ENCODE measurements at regions of chr14 and their contacts with region 1.

Region 1: GRCh38 chr14:97994020-97994531 is 1196.9 kb downstream of the VRK1 start:
- DNase-seq: peak in 9 of 14 experiments; percentile 14 to 87 (median 50)
- ATAC-seq: peak; percentile 81
- H3K4me3 ChIP-seq: no peak overlapping the region
- H3K4me3 Mint-ChIP-seq: peak overlapping the region; percentile 43
- H3K27ac ChIP-seq: peak overlapping the region; percentile 68 to 75
- H3K27ac Mint-ChIP-seq: peak overlapping the region; percentile 93
- H3K4me1 ChIP-seq: peaks cover 51% of the 10 kb centered on the region
- H3K4me1 Mint-ChIP-seq: peaks cover 88% of the 10 kb centered on the region
- H3K27me3 ChIP-seq: no peaks in the 10 kb centered on the region
- H3K27me3 Mint-ChIP-seq: no peaks in the 10 kb centered on the region
- CTCF ChIP-seq: no peak

Region 2: DNA sequence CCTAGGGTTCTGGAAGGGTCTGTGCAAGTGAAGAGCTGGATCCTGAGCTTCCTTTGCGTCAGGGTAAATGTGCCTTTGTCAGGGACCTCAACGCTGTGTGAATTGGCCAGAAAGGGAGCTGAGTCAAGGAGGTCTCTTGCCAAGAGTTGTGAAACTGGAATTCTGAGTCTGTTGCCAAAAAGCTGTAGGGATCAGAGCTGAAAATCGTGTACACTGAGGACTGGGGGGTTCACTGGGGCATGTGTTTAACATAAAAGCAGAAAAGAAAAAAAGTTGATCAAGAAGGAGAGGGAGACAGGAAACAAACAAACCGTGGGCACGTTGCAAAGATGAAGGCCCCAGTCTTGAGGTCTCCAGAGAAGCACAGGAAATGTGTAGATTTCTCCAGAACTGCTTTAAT is 115.3 kb before region 1 on chr14:
- CTCF ChIA-PET with region 1: no interaction called
- POLR2A ChIA-PET with region 1: no interaction called
- intact Hi-C with region 1: no loop called
- DNase-seq: peak in 11 of 14 experiments; percentile 2 to 55 (median 31)
- ATAC-seq: peak; percentile 89
- H3K4me3 ChIP-seq: no peak overlapping the region
- H3K4me3 Mint-ChIP-seq: peak overlapping the region; percentile 8
- H3K27ac ChIP-seq: peak overlapping the region; percentile 16 to 30
- H3K27ac Mint-ChIP-seq: peak overlapping the region; percentile 87
- H3K4me1 ChIP-seq: peaks cover 20% of the 10 kb centered on the region
- H3K4me1 Mint-ChIP-seq: peaks cover 65% of the 10 kb centered on the region
- H3K27me3 ChIP-seq: no peaks in the 10 kb centered on the region
- H3K27me3 Mint-ChIP-seq: no peaks in the 10 kb centered on the region
- CTCF ChIP-seq: no peak

Region 3: GRCh38 chr14:98018628-98019027 is 24.6 kb after region 1 on chr14:
- CTCF ChIA-PET with region 1: interaction called, 3 read pairs
- POLR2A ChIA-PET with region 1: interaction called, 23 read pairs
- intact Hi-C with region 1: loop called in 1 of 2 experiments (anchors 2 kb)
- DNase-seq: peak in 11 of 14 experiments; percentile 17 to 71 (median 37)
- ATAC-seq: peak; percentile 91
- H3K4me3 ChIP-seq: no peak overlapping the region
- H3K4me3 Mint-ChIP-seq: peak overlapping the region; percentile 32
- H3K27ac ChIP-seq: no peak overlapping the region
- H3K27ac Mint-ChIP-seq: peak overlapping the region; percentile 42
- H3K4me1 ChIP-seq: peaks cover 53% of the 10 kb centered on the region
- H3K4me1 Mint-ChIP-seq: peaks cover 75% of the 10 kb centered on the region
- H3K27me3 ChIP-seq: no peaks in the 10 kb centered on the region
- H3K27me3 Mint-ChIP-seq: no peaks in the 10 kb centered on the region
- CTCF ChIP-seq: no peak

Region 4: GRCh38 chr14:98103705-98104104 is 109.6 kb after region 1 on chr14:
- CTCF ChIA-PET with region 1: no interaction called
- POLR2A ChIA-PET with region 1: no interaction called
- intact Hi-C with region 1: loop called in 1 of 2 experiments (anchors 1 kb)
- DNase-seq: peak in 9 of 14 experiments; percentile 7 to 48 (median 37)
- ATAC-seq: peak; percentile 96
- H3K4me3 ChIP-seq: no peak overlapping the region
- H3K4me3 Mint-ChIP-seq: no peak overlapping the region
- H3K27ac ChIP-seq: no peak overlapping the region
- H3K27ac Mint-ChIP-seq: peak overlapping the region; percentile 41
- H3K4me1 ChIP-seq: peaks cover 2% of the 10 kb centered on the region
- H3K4me1 Mint-ChIP-seq: peaks cover 30% of the 10 kb centered on the region
- H3K27me3 ChIP-seq: no peaks in the 10 kb centered on the region
- H3K27me3 Mint-ChIP-seq: no peaks in the 10 kb centered on the region
- CTCF ChIP-seq: no peak

Region 5: GRCh38 chr14:99177886-99178835 is 1184.1 kb after region 1 on chr14:
- CTCF ChIA-PET with region 1: no interaction called
- POLR2A ChIA-PET with region 1: no interaction called
- intact Hi-C with region 1: loop called in 1 of 2 experiments (anchors 5 kb)
- DNase-seq: peak in 2 of 14 experiments; percentile 0 to 9
- ATAC-seq: no peak
- H3K4me3 ChIP-seq: no peak overlapping the region
- H3K4me3 Mint-ChIP-seq: peak overlapping the region; percentile 39
- H3K27ac ChIP-seq: peak overlapping the region; percentile 37 to 80
- H3K27ac Mint-ChIP-seq: peak overlapping the region; percentile 95
- H3K4me1 ChIP-seq: peaks cover 56% of the 10 kb centered on the region
- H3K4me1 Mint-ChIP-seq: peaks cover 75% of the 10 kb centered on the region
- H3K27me3 ChIP-seq: no peaks in the 10 kb centered on the region
- H3K27me3 Mint-ChIP-seq: no peaks in the 10 kb centered on the region
- CTCF ChIP-seq: no peak

Measured in CD4-positive, alpha-beta T cell (primary cell).